H1 (cell line): ENCODE measurements at regions of chr4 and their contacts with region 1.

Region 1: DNA sequence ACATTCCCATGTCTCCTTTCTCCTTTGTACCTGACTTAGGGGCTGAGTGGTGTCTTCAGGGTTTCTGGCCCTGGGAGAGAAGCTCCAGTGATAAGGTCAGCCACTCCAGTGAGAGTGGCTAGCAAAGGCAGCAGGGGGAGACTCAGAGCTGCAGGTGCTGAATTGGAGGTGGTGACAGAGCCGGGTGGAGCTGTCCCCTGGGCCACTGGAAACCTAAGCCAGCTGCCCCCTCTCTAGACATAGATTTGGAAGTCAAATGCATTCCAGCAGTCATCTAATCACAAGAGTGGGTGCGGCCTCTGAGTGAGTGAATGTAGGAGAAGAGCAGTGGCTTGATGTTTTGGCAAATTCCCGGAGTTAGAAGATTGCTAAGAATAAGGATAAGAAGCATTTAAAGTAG is 28.5 kb downstream of the TRIM2 start:
- DNase-seq: peak; percentile 41 to 60
- H3K4me3 ChIP-seq: no peak overlapping the region
- H3K27ac ChIP-seq: no peak overlapping the region
- H3K4me1 ChIP-seq: peaks cover 0 to 8% (median 5%) of the 10 kb centered on the region in 4 experiments; a peak in 4 of 7 replicates
- H3K27me3 ChIP-seq: no peaks in the 10 kb centered on the region
- CTCF ChIP-seq: peak; percentile 75 to 80 (median 76)
- EP300 ChIP-seq: no peak
- POLR2A ChIP-seq: no peak
- RAD21 ChIP-seq: peak; percentile 86 to 88

Region 2: GRCh38 chr4:153221783-153222706 is 10.7 kb before region 1 on chr4:
- CTCF ChIA-PET with region 1: interaction called, 18 read pairs
- POLR2A ChIA-PET with region 1: interaction called, 6 read pairs
- DNase-seq: peak in 1 of 2 experiments; percentile 65
- H3K4me3 ChIP-seq: peak overlapping the region; percentile 49 to 68 (median 60)
- H3K27ac ChIP-seq: no peak overlapping the region
- H3K4me1 ChIP-seq: no peaks in the 10 kb centered on the region; a peak in 1 of 7 replicates
- H3K27me3 ChIP-seq: peaks cover 0 to 10% (median 4%) of the 10 kb centered on the region in 4 experiments; a peak in 3 of 7 replicates
- CTCF ChIP-seq: no peak
- EP300 ChIP-seq: no peak
- POLR2A ChIP-seq: no peak; a peak in 1 of 3 replicates
- RAD21 ChIP-seq: no peak

Region 3: DNA sequence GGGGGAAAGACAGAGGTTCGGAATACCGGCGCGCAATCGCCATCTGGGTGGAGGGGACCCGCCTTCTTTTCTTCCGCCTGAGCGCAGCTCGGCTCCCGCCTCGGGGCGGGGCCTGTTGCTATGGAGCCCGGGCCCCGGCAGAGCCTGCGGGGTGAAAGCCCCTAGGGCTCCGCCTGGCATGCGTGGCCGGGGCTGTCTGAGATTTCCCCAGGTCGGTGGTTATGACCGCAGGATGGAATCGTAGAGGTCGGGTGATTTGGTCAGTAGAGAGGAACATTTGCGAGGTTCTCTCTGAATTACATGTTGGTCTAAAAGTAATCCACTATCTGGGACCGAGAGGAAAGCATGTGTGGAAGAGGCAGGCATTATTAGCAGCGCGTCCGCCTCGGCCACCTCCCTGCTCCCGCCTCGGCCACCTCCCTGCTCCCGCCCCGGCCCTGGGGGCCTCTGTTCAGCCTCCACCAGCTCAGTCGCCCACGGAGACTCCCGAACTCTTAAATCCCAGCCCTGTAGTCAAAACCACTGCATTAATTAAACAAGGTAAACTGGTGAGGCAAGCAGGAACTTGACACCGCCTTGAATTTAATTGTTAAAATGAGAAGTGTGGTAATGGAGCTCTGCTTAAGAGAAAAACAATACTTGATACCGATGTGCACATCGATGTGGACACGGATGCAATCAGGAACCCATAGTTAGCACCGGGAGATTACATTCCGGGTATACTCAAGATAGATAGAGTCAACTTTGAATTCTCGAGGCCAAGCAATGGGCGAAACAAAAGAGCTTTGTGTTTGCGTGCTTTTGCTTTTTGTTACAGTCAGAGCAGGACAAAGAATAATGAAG is 16.7 kb after region 1 on chr4:
- CTCF ChIA-PET with region 1: interaction called, 14 read pairs
- POLR2A ChIA-PET with region 1: interaction called, 5 read pairs
- DNase-seq: peak; percentile 58 to 91
- H3K4me3 ChIP-seq: peak overlapping the region; percentile 58 to 73 (median 70)
- H3K27ac ChIP-seq: peak overlapping the region; percentile 55
- H3K4me1 ChIP-seq: peaks cover 7 to 14% (median 10%) of the 10 kb centered on the region in 4 experiments
- H3K27me3 ChIP-seq: no peaks in the 10 kb centered on the region
- CTCF ChIP-seq: no peak
- EP300 ChIP-seq: no peak
- POLR2A ChIP-seq: peak in 1 of 2 experiments; percentile 30; a peak in 2 of 3 replicates
- RAD21 ChIP-seq: no peak

Region 4: GRCh38 chr4:153318696-153319320 is 86.0 kb after region 1 on chr4:
- CTCF ChIA-PET with region 1: interaction called, 32 read pairs
- POLR2A ChIA-PET with region 1: no interaction called
- DNase-seq: no peak
- H3K4me3 ChIP-seq: no peak overlapping the region
- H3K27ac ChIP-seq: no peak overlapping the region
- H3K4me1 ChIP-seq: no peaks in the 10 kb centered on the region
- H3K27me3 ChIP-seq: no peaks in the 10 kb centered on the region
- CTCF ChIP-seq: peak in 2 of 3 experiments; percentile 62 to 67; a peak in 2 of 4 replicates
- EP300 ChIP-seq: no peak
- POLR2A ChIP-seq: no peak
- RAD21 ChIP-seq: peak; percentile 84 to 85